Mammary epithelial cell (primary cell): ENCODE measurements at regions of chr7 and their contacts with region 1.

Region 1: DNA sequence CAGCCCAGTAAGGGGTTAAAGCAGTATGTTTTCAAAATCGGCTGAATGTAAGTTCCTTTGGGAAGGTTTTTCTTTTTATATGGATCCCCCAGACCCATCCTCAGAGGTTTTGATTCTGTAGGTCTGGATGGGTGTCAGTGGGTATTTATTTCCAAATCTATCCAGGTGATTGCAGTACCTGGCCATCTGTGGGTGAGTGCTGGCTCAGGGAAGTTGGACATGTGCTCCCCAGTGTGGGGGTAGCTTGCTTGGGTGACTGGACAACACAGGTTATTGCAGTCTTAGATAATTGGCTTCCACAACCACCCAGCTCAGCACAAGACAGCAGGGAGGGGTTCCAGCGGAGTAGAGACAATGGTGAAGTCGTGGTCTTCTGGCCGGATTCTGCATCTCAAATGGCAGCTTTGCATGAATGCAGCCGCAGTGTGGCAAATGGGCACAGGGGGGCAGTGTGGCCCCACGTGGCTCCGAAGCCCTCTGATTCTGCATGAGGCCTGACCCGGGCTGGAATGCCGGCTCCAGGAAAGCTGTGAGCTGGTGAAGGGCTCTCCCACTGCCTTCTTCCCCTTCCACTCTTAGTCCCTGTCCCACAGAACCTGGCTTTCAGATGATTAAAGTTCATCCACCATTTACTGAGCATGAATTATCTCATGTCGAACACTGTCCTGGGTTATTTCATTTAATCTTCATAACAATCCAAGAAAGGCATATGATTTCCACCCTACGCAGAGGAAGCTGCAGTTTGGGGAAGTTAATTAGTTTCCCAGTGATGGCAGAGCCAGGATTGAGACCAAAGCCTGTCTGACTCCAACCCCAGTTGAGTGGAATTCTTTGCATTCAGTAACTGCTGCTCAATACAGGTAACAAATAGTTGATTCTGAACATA is 64.5 kb upstream of the SYPL1 start:
- DNase-seq: peak; percentile 52
- H3K4me3 ChIP-seq: no peak overlapping the region
- H3K27ac ChIP-seq: no peak overlapping the region
- H3K4me1 ChIP-seq: peaks cover 3% of the 10 kb centered on the region
- H3K27me3 ChIP-seq: no peaks in the 10 kb centered on the region
- CTCF ChIP-seq: peak; percentile 96 to 98

Region 2: DNA sequence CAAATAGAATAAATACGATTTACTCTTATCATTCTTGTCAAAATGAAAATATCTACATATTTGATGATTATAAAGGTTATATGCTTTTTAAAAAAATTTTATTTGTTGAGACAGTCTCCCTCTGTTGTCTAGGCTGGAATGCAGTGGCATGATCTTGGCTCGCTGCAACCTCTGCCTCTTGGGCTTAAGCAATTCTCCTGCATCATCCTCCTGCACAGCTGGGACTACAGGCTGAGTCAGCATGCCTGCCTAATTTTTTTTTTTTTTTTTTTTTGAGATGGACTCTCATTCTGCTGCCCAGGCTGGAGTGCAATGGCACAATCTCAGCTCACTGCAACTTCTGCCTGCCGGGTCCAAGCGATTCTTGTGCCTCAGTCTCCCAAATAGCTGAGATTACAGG is 703.5 kb before region 1 on chr7:
- CTCF ChIA-PET with region 1: no interaction called
- dilution Hi-C with region 1: no loop called
- in situ Hi-C with region 1: no loop called
- intact Hi-C with region 1: no loop called
- DNase-seq: peak; percentile 62
- H3K4me3 ChIP-seq: no peak overlapping the region
- H3K27ac ChIP-seq: no peak overlapping the region
- H3K4me1 ChIP-seq: no peaks in the 10 kb centered on the region
- H3K27me3 ChIP-seq: no peaks in the 10 kb centered on the region
- CTCF ChIP-seq: peak in 1 of 2 donors; percentile 6

Region 3: DNA sequence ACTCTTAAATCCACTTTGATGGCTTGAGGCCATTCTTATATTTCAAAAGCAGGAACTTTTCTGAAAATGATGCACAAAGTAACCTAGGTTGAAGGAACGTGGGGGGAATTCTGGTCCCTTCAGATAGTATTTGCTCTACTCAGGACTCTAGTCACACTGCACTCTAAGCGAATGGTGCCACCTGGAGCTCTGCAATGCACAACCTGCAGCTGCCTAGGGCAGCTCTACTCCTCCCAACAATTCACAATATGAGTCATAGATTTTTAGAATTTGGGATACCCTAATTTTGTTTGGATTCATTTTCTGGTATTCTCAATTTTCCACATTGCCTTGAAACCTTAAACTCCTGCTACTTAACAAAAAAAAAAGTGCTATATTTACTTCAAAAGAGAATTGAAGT is 81.9 kb before region 1 on chr7:
- CTCF ChIA-PET with region 1: no interaction called
- dilution Hi-C with region 1: no loop called
- in situ Hi-C with region 1: no loop called
- intact Hi-C with region 1: no loop called
- DNase-seq: no peak
- H3K4me3 ChIP-seq: no peak overlapping the region
- H3K27ac ChIP-seq: no peak overlapping the region
- H3K4me1 ChIP-seq: no peaks in the 10 kb centered on the region
- H3K27me3 ChIP-seq: no peaks in the 10 kb centered on the region
- CTCF ChIP-seq: peak in 1 of 2 donors; percentile 53

Region 4: DNA sequence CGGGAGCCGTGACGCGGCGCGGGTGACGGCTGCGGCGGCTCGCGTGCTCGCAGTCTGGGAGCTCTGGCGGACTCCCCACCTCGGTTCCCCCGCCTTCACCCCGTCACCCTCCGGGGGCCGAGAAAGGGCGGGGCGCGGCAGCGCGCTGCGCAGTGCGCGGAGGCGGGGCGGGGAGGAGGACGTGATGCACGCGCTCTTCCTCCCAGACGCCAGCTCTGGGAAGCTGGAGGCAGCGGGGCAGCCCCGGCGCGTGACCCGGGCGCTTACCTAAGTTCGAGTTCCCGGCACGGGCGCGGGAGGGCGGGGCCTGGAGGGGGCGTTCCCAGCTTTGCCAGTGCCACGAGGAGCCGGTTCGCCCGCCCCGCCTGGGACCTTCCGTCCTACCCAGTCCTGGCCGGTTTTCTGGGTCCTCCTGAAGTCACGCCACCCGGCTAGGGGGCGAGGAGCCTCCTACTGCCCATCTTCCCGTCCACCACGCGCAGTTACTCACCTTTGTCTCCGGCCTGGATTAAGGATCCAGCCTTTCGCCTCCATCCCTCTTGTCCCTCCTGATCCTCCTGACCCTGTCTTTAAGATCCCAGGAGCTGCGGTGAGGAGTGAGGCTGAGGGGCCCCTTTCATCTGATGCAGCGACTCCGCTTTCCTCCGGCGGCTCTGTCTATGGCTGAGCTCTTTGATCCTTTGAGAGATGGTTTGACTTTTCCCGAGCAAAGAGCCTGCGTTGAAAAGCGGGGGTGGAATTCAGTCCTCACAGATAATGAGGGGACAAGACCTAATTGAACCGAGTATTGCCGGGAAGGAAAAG is 108.6 kb after region 1 on chr7:
- CTCF ChIA-PET with region 1: no interaction called
- dilution Hi-C with region 1: no loop called
- in situ Hi-C with region 1: no loop called
- intact Hi-C with region 1: loop called (anchors 5 kb)
- DNase-seq: peak; percentile 100
- H3K4me3 ChIP-seq: peak overlapping the region; percentile 50 to 93 (median 60)
- H3K27ac ChIP-seq: peak overlapping the region; percentile 98
- H3K4me1 ChIP-seq: peaks cover 17% of the 10 kb centered on the region
- H3K27me3 ChIP-seq: no peaks in the 10 kb centered on the region
- CTCF ChIP-seq: no peak

Region 5: DNA sequence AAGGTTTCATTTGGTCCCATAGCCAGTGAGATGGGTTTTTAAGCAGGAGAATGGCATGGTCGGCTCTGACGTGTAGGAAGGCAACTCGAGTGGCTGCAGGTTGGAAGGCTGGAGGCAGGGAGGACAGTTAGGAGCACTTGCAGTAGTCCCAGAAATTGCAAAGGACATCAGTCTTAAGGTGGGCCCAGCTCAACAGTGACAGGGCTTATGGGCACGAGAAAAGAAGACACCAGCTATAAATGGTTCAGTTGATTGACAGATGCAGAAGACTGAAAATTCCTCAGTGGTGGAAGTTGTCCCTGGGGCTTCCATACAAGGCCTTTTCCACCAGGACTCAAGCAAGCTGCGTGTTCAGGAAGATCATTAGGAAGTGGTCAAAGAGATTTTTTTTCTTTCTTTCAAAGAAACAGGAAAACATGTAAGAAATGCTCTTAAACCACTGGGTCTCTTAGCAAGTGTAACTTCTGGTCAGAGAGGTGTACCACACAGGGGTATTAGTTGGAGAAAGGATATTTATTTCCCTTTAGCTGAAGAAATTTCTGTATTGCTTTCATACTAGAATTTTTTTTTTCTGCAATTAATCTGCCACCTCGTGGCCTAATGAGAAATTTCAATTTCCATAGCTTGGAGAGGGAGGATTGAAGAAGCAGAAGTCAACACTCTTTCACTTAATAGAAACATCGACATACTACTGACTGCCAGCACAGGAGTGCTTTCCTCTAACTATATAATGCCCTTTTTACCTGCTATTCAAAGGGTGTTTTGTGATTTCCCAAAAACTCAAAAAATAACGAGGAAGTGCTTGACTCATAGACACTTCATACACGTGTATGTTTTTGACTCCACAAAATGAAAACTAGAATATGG is 285.6 kb after region 1 on chr7:
- CTCF ChIA-PET with region 1: interaction called, 13 read pairs
- dilution Hi-C with region 1: no loop called
- in situ Hi-C with region 1: loop called (anchors 5 kb)
- intact Hi-C with region 1: loop called (anchors 1 kb)
- DNase-seq: peak; percentile 50
- H3K4me3 ChIP-seq: no peak overlapping the region
- H3K27ac ChIP-seq: no peak overlapping the region
- H3K4me1 ChIP-seq: peaks cover 22% of the 10 kb centered on the region
- H3K27me3 ChIP-seq: no peaks in the 10 kb centered on the region
- CTCF ChIP-seq: peak; percentile 39 to 52

Region 6: GRCh38 chr7:106542550-106543220 is 366.0 kb after region 1 on chr7:
- CTCF ChIA-PET with region 1: interaction called, 20 read pairs
- dilution Hi-C with region 1: no loop called
- in situ Hi-C with region 1: no loop called
- intact Hi-C with region 1: loop called (anchors 1 kb)
- DNase-seq: peak; percentile 70
- H3K4me3 ChIP-seq: no peak overlapping the region
- H3K27ac ChIP-seq: no peak overlapping the region
- H3K4me1 ChIP-seq: no peaks in the 10 kb centered on the region
- H3K27me3 ChIP-seq: no peaks in the 10 kb centered on the region
- CTCF ChIP-seq: peak; percentile 68 to 81

Region 7: GRCh38 chr7:106736508-106737201 is 560.0 kb after region 1 on chr7:
- CTCF ChIA-PET with region 1: no interaction called
- dilution Hi-C with region 1: no loop called
- in situ Hi-C with region 1: loop called (anchors 10 kb)
- intact Hi-C with region 1: loop called (anchors 1 kb)
- DNase-seq: peak; percentile 80
- H3K4me3 ChIP-seq: peak overlapping the region; percentile 7 to 34 (median 22)
- H3K27ac ChIP-seq: peak overlapping the region; percentile 77
- H3K4me1 ChIP-seq: peaks cover 17% of the 10 kb centered on the region
- H3K27me3 ChIP-seq: no peaks in the 10 kb centered on the region
- CTCF ChIP-seq: peak; percentile 81 to 84

Region 8: GRCh38 chr7:107150375-107151073 is 973.9 kb after region 1 on chr7:
- CTCF ChIA-PET with region 1: no interaction called
- dilution Hi-C with region 1: no loop called
- in situ Hi-C with region 1: loop called in 1 of 2 experiments (anchors 25 kb)
- intact Hi-C with region 1: loop called (anchors 2 kb)
- DNase-seq: peak; percentile 44
- H3K4me3 ChIP-seq: no peak overlapping the region
- H3K27ac ChIP-seq: no peak overlapping the region
- H3K4me1 ChIP-seq: peaks cover 13% of the 10 kb centered on the region
- H3K27me3 ChIP-seq: no peaks in the 10 kb centered on the region
- CTCF ChIP-seq: peak; percentile 50 to 58